Heart right ventricle (tissue), 16 donors: ENCODE measurements at regions of chr4 and their contacts with region 1.

Region 1: DNA sequence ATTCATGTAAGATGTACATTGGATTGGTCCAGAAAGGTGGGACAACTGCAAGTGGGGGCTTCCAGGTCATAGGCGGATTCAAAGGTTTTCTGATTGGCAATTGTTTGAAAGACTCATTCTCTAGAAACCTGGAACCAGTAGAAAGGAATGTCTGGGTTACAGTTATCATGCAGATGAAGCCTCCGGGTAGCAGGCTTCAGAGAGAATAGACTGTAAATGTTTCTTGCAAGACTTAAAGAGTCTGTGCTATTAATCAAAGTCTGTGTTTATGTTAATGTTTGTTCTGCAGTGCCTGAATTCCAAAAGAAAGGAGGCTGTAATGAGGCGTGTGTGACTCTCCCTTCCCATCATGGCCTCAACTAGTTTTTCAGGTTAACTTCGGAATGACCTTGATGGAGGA is 43.9 kb upstream of the GC start:
- DNase-seq: no peak
- ATAC-seq: no peak
- H3K4me3 ChIP-seq: no peak overlapping the region
- H3K27ac ChIP-seq: no peak overlapping the region
- H3K4me1 ChIP-seq: no peaks in the 10 kb centered on the region
- H3K27me3 ChIP-seq: no peaks in the 10 kb centered on the region
- CTCF ChIP-seq: no peak

Region 2: GRCh38 chr4:70313736-70314135 is 1514.1 kb before region 1 on chr4:
- intact Hi-C with region 1: loop called in 1 of 10 experiments (anchors 5 kb)
- DNase-seq: no peak
- ATAC-seq: no peak
- H3K4me3 ChIP-seq: no peak overlapping the region
- H3K27ac ChIP-seq: no peak overlapping the region
- H3K4me1 ChIP-seq: no peaks in the 10 kb centered on the region
- H3K27me3 ChIP-seq: no peaks in the 10 kb centered on the region
- CTCF ChIP-seq: no peak

Region 3: DNA sequence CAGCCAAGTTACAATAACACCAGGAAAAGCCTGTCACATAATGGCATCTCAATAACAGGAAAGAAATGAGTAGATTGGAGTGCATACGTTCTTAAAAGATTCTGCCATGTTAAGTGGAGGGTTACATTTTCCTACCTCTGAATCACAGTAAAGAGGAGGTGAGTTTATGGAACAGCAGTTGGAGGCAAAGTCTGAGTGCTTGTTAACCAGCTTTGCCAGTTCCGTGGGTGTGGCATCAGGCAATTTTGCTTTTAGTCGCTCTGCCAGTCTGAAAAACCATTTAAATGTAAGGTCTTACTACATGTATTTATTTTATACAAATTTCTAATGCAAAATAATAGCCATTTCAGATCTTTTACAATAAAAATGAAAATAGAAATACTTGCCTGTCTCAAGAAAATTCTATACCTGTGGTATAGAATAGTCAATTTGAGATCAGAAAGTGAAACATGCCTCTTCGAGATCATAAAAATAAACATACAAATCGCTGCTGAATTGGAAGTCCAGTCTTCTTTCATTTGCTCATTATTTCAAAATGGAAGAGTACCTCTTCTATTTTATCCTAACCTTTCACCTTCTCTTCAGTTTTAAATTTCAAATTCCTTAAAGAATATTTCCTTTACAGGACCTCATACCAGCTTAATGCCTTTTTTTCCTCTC is 75.3 kb before region 1 on chr4:
- intact Hi-C with region 1: no loop called
- DNase-seq: no peak
- ATAC-seq: no peak
- H3K4me3 ChIP-seq: no peak overlapping the region
- H3K27ac ChIP-seq: no peak overlapping the region
- H3K4me1 ChIP-seq: no peaks in the 10 kb centered on the region
- H3K27me3 ChIP-seq: no peaks in the 10 kb centered on the region
- CTCF ChIP-seq: no peak

Region 4: GRCh38 chr4:71783972-71784371 is 43.8 kb before region 1 on chr4 and contains the start of gene GC:
- intact Hi-C with region 1: no loop called
- DNase-seq: no peak
- ATAC-seq: no peak
- H3K4me3 ChIP-seq: no peak within 1 kb of the TSS
- H3K27ac ChIP-seq: no peak within 1 kb of the TSS
- H3K4me1 ChIP-seq: no peaks in the 10 kb centered on the region
- H3K27me3 ChIP-seq: no peaks in the 10 kb centered on the region
- CTCF ChIP-seq: no peak
- total RNA-seq, gene GC: 0.20 TPM in 1 of 10 donors, not detected in the others